MCF 10A (cell line): ENCODE measurements at regions of chr1 and their contacts with region 1.

Region 1: GRCh38 chr1:94061513-94062443 is 59.2 kb downstream of the ABCA4 start:
- DNase-seq: peak; percentile 76
- H3K4me3 Mint-ChIP-seq: no peak overlapping the region
- H3K27ac Mint-ChIP-seq: no peak overlapping the region
- H3K4me1 Mint-ChIP-seq: peaks cover 5% of the 10 kb centered on the region
- H3K27me3 Mint-ChIP-seq: no peaks in the 10 kb centered on the region
- CTCF ChIP-seq: peak; percentile 87

Region 2: DNA sequence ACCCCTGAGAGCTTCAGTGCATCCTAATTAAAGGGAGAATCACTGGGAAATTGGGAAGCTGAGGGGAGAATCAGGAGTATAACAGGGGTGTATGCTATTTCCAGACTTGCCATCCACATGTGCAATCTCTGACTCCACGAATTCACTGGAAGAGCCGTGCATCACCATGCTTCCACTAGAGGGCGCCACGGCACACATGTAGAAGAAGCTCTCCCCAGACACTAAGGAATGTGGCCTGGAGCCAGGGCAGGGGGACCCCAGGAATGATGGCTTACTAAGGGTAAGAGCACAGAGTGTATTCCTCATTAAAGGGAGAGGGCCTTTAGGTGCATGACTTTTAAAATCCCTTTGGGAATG is 22.3 kb before region 1 on chr1:
- CTCF ChIA-PET with region 1: interaction called, 99 read pairs
- POLR2A ChIA-PET with region 1: interaction called, 3 read pairs
- intact Hi-C with region 1: no loop called
- DNase-seq: peak; percentile 80
- H3K4me3 Mint-ChIP-seq: no peak overlapping the region
- H3K27ac Mint-ChIP-seq: no peak overlapping the region
- H3K4me1 Mint-ChIP-seq: peaks cover 19% of the 10 kb centered on the region
- H3K27me3 Mint-ChIP-seq: no peaks in the 10 kb centered on the region
- CTCF ChIP-seq: peak; percentile 89

Region 3: GRCh38 chr1:94045465-94046056 is 16.2 kb before region 1 on chr1:
- CTCF ChIA-PET with region 1: interaction called, 99 read pairs
- POLR2A ChIA-PET with region 1: interaction called, 4 read pairs
- intact Hi-C with region 1: loop called (anchors 1 kb)
- DNase-seq: peak; percentile 90
- H3K4me3 Mint-ChIP-seq: no peak overlapping the region
- H3K27ac Mint-ChIP-seq: peak overlapping the region; percentile 51
- H3K4me1 Mint-ChIP-seq: peaks cover 18% of the 10 kb centered on the region
- H3K27me3 Mint-ChIP-seq: no peaks in the 10 kb centered on the region
- CTCF ChIP-seq: peak; percentile 45

Region 4: GRCh38 chr1:94081566-94082344 is 20.0 kb after region 1 on chr1:
- CTCF ChIA-PET with region 1: interaction called, 23 read pairs
- POLR2A ChIA-PET with region 1: no interaction called
- intact Hi-C with region 1: no loop called
- DNase-seq: peak; percentile 95
- H3K4me3 Mint-ChIP-seq: no peak overlapping the region
- H3K27ac Mint-ChIP-seq: peak overlapping the region; percentile 29
- H3K4me1 Mint-ChIP-seq: peaks cover 13% of the 10 kb centered on the region
- H3K27me3 Mint-ChIP-seq: no peaks in the 10 kb centered on the region
- CTCF ChIP-seq: no peak

Region 5: DNA sequence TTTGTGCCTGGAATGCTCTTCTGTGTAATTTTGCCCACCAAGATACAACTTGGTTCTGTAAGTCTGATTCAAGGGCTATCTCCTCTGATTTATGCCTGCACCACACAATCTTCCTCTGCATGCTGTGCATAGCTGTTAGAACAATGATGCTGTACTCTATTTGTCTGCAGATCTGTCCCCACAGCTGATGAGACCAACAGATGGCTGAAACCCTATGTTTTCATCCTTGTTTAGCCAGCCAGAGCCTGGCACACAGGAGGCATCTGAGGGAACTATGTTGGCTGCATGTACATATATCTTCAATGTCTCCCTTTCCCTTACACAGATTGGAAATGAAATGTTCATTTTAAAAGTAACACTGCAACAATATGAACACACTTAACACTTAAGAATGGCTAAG is 117.1 kb after region 1 on chr1:
- CTCF ChIA-PET with region 1: interaction called, 3 read pairs
- POLR2A ChIA-PET with region 1: no interaction called
- intact Hi-C with region 1: loop called (anchors 10 kb)
- DNase-seq: no peak
- H3K4me3 Mint-ChIP-seq: no peak overlapping the region
- H3K27ac Mint-ChIP-seq: no peak overlapping the region
- H3K4me1 Mint-ChIP-seq: peaks cover 7% of the 10 kb centered on the region
- H3K27me3 Mint-ChIP-seq: no peaks in the 10 kb centered on the region
- CTCF ChIP-seq: no peak